ENCODE measurements at regions of chr11 and their contacts with region 1.

Region 1: GRCh38 chr11:12159351-12160099 is 49.1 kb downstream of the MICAL2 start:
- DNase-seq: no peak
- CTCF ChIP-seq: no peak

Region 2: DNA sequence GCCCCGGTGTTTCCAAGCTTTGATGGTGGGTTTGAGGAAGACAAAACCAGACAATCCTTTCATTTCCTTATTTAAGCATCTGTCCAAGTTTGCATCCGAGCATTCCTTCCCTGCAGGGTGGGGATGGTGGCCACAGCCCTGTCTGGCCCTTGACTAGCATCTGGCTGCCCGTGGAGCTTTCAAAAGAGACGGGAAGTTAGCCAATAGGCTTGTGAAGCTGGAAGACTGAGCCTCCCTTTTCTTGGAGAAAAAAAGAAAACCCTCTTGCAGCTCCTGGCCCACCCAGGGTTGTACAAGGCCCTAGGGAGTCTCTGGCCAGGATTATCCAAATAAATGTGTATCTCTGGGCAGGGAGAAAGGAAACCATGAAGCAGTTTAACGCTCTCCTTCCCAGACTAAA is 11.5 kb after region 1 on chr11:
- CTCF ChIA-PET with region 1: interaction called, 25 read pairs
- POLR2A ChIA-PET with region 1: no interaction called
- DNase-seq: no peak
- CTCF ChIP-seq: no peak